Common myeloid progenitor, CD34-positive (primary cell): ENCODE measurements at regions of chr15 and their contacts with region 1.

Region 1: DNA sequence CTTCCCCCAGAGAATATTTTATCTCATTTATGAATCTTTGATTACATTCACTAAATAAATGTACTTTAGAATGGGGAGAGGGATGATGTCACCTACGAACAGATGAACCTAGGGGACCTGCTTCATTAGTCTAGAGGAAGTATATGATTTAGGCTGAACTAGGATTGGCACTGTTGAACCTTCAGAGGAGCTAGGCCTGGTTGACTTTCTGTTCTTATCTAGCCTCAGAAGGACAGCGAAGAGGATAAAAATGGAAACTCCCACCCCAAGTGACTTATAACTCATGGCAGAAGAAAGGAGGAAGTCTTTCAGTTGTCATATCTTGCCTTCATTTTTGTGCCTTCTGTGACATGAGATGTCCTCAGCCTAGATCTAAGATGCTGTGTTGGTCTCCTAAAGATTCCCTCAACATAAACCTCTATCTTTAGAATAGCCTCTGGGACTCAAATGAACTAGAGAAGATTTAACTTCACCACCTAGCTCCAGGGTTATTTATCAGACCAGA is 42.6 kb downstream of the POLG start:
- DNase-seq: peak in 1 of 3 donors; percentile 3
- H3K4me3 ChIP-seq: no peak overlapping the region
- H3K27ac ChIP-seq: no peak overlapping the region
- H3K4me1 ChIP-seq: no peaks in the 10 kb centered on the region
- H3K27me3 ChIP-seq: no peaks in the 10 kb centered on the region

Region 2: GRCh38 chr15:88982304-88982945 is 309.6 kb before region 1 on chr15:
- CTCF ChIA-PET with region 1: no interaction called
- POLR2A ChIA-PET with region 1: no interaction called
- DNase-seq: no peak
- H3K4me3 ChIP-seq: no peak overlapping the region
- H3K27ac ChIP-seq: no peak overlapping the region
- H3K4me1 ChIP-seq: no peaks in the 10 kb centered on the region
- H3K27me3 ChIP-seq: no peaks in the 10 kb centered on the region

Region 3: GRCh38 chr15:89278307-89278706 is 13.7 kb before region 1 on chr15:
- CTCF ChIA-PET with region 1: interaction called, 14 read pairs
- POLR2A ChIA-PET with region 1: no interaction called
- DNase-seq: no peak
- H3K4me3 ChIP-seq: no peak overlapping the region
- H3K27ac ChIP-seq: no peak overlapping the region
- H3K4me1 ChIP-seq: no peaks in the 10 kb centered on the region
- H3K27me3 ChIP-seq: no peaks in the 10 kb centered on the region